ENCODE measurements at regions of chr14 and their contacts with region 1.

Region 1: GRCh38 chr14:55277972-55278740 is 6.9 kb downstream of the FBXO34 start:
- DNase-seq: no peak
- ATAC-seq: no peak
- H3K4me3 ChIP-seq: no peak overlapping the region
- H3K27ac ChIP-seq: no peak overlapping the region
- H3K4me1 ChIP-seq: peaks cover 2% of the 10 kb centered on the region
- H3K27me3 ChIP-seq: no peaks in the 10 kb centered on the region
- CTCF ChIP-seq: no peak
- POLR2A ChIP-seq: no peak
- RAD21 ChIP-seq: no peak

Region 2: DNA sequence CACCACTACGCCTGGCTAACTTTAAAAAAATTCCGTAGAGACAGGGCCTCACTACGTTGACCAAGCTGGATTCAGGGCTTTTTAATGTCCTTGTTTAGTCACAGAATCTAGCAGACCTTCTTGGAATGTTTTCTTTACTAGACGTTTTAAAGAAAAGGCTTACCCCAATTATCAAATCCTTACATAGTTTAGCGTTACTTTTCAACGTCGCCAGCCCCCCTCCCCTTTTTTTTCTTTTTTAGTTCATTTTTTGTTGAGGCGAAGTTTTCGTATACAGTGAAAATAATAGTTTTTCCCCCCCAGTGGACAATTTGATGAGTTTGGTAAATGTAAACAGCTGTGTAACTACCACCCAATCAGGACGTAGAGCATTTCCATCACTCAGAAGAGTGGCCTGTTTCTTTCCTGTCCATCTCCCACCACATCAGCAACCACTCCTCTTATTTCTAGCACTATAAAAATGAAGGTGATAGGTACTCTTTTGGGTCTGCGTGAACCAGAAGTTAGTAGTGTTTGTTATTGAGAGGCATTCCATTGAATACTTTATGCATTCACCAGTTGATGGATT is 86.0 kb before region 1 on chr14:
- CTCF ChIA-PET with region 1: no interaction called
- POLR2A ChIA-PET with region 1: no interaction called
- dilution Hi-C with region 1: no loop called
- in situ Hi-C with region 1: no loop called
- intact Hi-C with region 1: no loop called
- DNase-seq: no peak
- ATAC-seq: no peak
- H3K4me3 ChIP-seq: peak overlapping the region; percentile 52
- H3K27ac ChIP-seq: peak overlapping the region; percentile 40
- H3K4me1 ChIP-seq: no peaks in the 10 kb centered on the region
- H3K27me3 ChIP-seq: no peaks in the 10 kb centered on the region
- CTCF ChIP-seq: no peak
- POLR2A ChIP-seq: no peak
- RAD21 ChIP-seq: no peak

Region 3: DNA sequence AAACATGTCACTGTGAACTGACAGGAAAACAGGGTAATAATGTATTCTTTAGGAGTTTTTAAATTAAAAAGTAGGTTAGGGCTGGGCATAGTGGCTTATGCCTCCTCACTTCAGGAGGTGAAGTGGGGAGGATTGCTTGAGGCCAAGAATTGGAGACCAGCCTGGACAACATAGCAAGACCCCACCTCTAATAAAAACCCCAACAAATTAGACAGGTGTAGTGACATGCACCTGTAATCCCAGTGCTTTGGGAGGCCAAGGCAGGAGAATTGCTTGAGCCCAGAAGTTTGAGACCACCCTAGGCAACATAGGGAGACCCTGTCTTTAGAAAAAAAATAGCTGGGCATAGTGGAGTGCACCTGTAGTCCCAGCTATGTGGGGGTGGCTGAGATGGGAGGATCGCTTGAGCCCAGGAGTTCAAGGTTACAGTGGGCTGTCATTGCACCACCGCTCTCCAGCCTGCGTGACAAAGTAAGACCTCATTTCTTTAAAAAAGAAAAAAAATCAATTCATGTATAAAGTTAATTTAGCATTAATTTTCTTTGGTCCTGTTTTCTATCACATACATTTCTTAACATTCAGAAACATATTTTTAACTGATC is 13.4 kb after region 1 on chr14:
- CTCF ChIA-PET with region 1: interaction called, 11 read pairs
- POLR2A ChIA-PET with region 1: no interaction called
- dilution Hi-C with region 1: no loop called
- in situ Hi-C with region 1: no loop called
- intact Hi-C with region 1: no loop called
- DNase-seq: no peak
- ATAC-seq: no peak
- H3K4me3 ChIP-seq: no peak overlapping the region
- H3K27ac ChIP-seq: no peak overlapping the region
- H3K4me1 ChIP-seq: peaks cover 2% of the 10 kb centered on the region
- H3K27me3 ChIP-seq: no peaks in the 10 kb centered on the region
- CTCF ChIP-seq: no peak
- POLR2A ChIP-seq: no peak
- RAD21 ChIP-seq: no peak

Region 4: GRCh38 chr14:55323910-55324309 is 45.8 kb after region 1 on chr14:
- CTCF ChIA-PET with region 1: no interaction called
- POLR2A ChIA-PET with region 1: no interaction called
- dilution Hi-C with region 1: no loop called
- in situ Hi-C with region 1: no loop called
- intact Hi-C with region 1: no loop called
- DNase-seq: no peak
- ATAC-seq: no peak
- H3K4me3 ChIP-seq: no peak overlapping the region
- H3K27ac ChIP-seq: no peak overlapping the region
- H3K4me1 ChIP-seq: peaks cover 2% of the 10 kb centered on the region; the same call in 1 of the 2 replicates
- H3K27me3 ChIP-seq: no peaks in the 10 kb centered on the region
- CTCF ChIP-seq: no peak
- POLR2A ChIP-seq: no peak
- RAD21 ChIP-seq: no peak